Activated CD8-positive, alpha-beta memory T cell treated with anti-CD3 and anti-CD28 coated beads, Interleukin-2, amount 10 ng/mL, durations not matched to agents 7 days and 5 days (primary cell): ENCODE measurements at regions of chr22 and their contacts with region 1.

Region 1: GRCh38 chr22:22942511-22943329 is 55.1 kb downstream of the IGLL5 start:
- DNase-seq: peak; percentile 82
- ATAC-seq: peak; percentile 77
- H3K4me3 Mint-ChIP-seq: no peak overlapping the region
- H3K27ac Mint-ChIP-seq: no peak overlapping the region
- H3K4me1 Mint-ChIP-seq: peaks cover 4% of the 10 kb centered on the region
- H3K27me3 Mint-ChIP-seq: peaks cover 7% of the 10 kb centered on the region

Region 2: DNA sequence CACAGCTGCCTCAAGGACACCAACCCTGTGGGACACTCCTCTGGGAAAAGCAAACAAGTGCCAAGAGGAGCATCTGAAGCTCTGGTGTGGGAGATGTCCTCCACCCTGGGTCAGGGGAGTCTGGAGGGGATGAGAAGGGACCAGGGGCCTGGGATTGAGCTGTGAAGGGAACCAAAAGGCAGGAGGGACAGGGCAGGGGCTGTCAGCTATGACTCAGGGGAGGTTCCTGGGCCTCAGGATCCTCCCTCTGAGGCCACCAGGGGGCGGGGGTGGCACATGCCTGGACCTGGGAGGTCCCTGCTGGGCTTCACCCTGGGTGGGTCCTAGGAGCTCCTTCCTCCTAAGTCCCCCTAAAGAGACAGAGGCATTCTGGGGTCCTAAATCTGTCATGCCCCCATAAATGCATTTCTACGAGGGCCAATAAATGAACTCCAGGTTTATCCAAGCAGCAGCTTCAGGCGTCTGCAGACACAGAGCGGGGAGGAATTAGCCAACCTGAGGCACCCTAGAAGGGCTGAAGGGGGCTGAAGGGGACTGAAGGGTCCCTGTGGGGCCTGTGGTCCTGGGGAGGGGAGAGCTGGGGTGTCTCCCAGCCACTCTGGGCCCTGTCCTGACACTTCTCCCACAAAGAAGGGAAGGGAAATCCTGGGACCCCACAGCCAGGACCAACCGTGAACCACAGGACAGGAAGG is 87.0 kb before region 1 on chr22:
- CTCF ChIA-PET with region 1: interaction called, 10 read pairs
- DNase-seq: peak; percentile 64
- ATAC-seq: peak; percentile 86
- H3K4me3 Mint-ChIP-seq: no peak overlapping the region
- H3K27ac Mint-ChIP-seq: no peak overlapping the region
- H3K4me1 Mint-ChIP-seq: no peaks in the 10 kb centered on the region
- H3K27me3 Mint-ChIP-seq: peaks cover 33% of the 10 kb centered on the region

Region 3: DNA sequence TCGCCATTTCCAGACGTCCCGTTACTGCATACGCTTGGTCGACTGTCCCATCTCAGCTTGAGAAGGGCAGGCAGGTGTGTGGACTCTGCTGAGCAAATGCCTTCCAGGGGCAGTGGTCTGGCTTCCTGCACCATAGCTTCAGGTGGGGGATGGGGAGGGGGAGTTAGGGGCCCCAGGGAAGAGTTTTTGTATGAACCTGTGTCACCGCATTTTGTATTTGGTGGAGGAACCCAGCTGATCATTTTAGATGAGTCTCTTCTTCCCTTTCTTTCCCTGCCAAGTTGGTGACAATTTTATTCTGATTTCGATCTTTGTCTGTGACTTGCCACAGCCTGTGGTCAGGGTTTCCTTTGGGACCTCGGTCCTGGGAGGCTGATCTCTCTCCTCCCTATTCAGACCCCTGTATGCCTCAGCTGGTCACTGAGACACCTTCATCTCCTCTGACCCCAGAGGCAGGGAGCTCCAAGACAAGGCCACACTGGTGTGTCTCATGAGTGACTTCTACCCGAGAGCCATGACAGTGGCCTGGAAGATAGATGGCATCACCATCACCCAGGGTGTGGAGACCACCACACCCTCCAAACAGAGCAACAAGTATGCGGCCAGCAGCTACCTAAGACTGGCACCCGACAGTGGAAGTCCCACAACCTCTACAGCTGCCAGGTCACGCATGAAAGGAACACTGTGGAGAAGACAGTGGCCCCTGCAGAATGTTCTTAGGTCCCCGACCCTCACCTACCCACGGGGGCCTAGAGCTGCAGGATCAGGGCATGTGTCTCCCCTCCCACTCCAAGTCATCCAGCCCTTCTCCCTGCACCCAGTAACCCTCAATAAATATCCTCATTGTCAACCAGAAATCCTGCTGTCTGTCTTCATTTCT is 32.1 kb before region 1 on chr22:
- CTCF ChIA-PET with region 1: interaction called, 10 read pairs
- DNase-seq: no peak
- ATAC-seq: no peak
- H3K4me3 Mint-ChIP-seq: no peak overlapping the region
- H3K27ac Mint-ChIP-seq: no peak overlapping the region
- H3K4me1 Mint-ChIP-seq: no peaks in the 10 kb centered on the region
- H3K27me3 Mint-ChIP-seq: peaks cover 23% of the 10 kb centered on the region

Region 4: DNA sequence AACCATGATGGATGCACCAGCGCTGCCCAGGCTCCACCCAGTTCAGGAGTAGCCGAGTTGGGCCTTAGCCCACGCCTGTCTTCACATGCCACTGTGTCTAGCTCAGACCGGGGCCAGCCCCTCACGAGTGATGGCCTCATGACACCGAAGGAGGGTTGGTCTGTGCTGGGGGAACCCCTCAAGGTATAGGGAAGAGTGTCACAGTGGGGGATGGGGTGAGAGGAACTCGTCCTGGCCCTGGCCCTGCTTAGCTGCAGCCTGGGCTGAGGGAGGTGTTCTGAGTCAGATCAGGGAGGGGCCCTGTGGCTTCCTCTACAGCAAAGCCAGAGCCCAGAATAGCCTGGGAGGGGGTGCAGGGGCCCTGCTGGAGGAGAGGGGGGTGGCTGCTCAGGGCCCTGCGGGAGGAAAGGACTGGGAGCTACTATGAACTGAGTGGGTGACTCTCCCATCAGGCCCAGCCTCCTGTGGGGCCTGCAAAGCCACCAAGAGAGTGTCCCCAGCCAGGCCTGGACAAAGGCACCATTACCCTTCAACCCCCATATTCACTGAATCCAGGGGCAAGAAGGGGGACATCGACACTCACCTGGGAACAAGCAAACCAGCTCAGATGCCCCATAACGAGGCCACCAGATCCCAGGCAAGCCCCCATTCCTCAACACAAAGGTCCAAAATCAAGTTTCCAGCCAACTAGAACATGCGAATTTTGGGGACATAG is 13.9 kb before region 1 on chr22:
- CTCF ChIA-PET with region 1: interaction called, 25 read pairs
- DNase-seq: peak; percentile 87
- ATAC-seq: peak; percentile 97
- H3K4me3 Mint-ChIP-seq: no peak overlapping the region
- H3K27ac Mint-ChIP-seq: peak overlapping the region; percentile 74
- H3K4me1 Mint-ChIP-seq: peaks cover 32% of the 10 kb centered on the region
- H3K27me3 Mint-ChIP-seq: no peaks in the 10 kb centered on the region

Region 5: GRCh38 chr22:22981670-22982571 is 39.2 kb after region 1 on chr22:
- CTCF ChIA-PET with region 1: no interaction called
- DNase-seq: no peak
- ATAC-seq: no peak
- H3K4me3 Mint-ChIP-seq: no peak overlapping the region
- H3K27ac Mint-ChIP-seq: no peak overlapping the region
- H3K4me1 Mint-ChIP-seq: no peaks in the 10 kb centered on the region
- H3K27me3 Mint-ChIP-seq: peaks cover 19% of the 10 kb centered on the region